ENCODE measurements at regions of chr6 and their contacts with region 1.

Region 1: DNA sequence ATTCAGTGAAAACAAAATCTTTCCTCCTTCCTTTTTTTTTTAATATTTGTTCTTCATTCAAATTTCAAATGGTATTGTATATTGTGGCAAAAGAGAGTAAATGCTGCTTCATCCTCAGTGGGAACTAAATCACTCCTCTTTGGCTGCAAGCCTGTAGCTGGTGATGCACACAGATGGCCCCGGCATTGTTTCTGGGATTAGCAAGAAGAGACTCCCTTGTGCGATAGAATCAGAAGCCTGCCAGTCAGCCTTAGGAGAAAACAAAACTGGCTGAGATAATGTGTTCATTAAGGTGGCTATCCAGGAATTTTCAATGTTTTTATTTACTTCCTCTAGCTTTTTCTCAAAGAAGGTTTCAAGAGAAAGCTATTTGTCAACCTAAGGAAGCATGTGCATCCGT is 20.7 kb upstream of the ELOVL2 start:
- DNase-seq: no peak

Region 2: DNA sequence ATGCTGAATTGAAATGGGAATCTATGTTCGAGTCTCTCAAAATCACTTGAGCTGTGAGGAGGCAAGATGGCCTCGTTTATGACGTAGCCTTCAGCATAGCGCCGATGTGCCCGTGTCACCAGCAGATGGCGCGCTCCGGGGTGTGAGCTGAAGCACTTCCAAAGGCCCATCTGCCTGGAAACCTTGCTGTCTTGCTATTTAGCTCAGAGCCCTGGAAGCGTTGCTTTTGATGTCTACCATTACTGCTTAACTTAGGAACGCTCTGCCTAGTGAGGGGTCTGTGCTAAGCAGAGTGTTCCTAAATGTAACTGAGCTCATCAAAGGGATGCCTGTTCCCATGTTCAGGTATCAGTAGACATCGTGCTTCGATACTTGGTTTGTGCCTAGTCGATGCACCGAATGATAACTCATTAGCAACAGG is 110.2 kb before region 1 on chr6:
- in situ Hi-C with region 1: loop called (anchors 10 kb)
- DNase-seq: peak; percentile 94